Heart right ventricle (tissue), 16 donors: ENCODE measurements at regions of chr6 and their contacts with region 1.

Region 1: GRCh38 chr6:122059918-122060317 is 339.5 kb upstream of the HSF2 start:
- DNase-seq: no peak
- ATAC-seq: no peak
- H3K4me3 ChIP-seq: no peak overlapping the region
- H3K27ac ChIP-seq: no peak overlapping the region
- H3K4me1 ChIP-seq: no peaks in the 10 kb centered on the region
- H3K27me3 ChIP-seq: no peaks in the 10 kb centered on the region
- CTCF ChIP-seq: no peak

Region 2: GRCh38 chr6:121901432-121901831 is 158.5 kb before region 1 on chr6:
- intact Hi-C with region 1: no loop called
- DNase-seq: no peak
- ATAC-seq: no peak
- H3K4me3 ChIP-seq: no peak overlapping the region
- H3K27ac ChIP-seq: no peak overlapping the region
- H3K4me1 ChIP-seq: no peaks in the 10 kb centered on the region
- H3K27me3 ChIP-seq: no peaks in the 10 kb centered on the region
- CTCF ChIP-seq: no peak

Region 3: DNA sequence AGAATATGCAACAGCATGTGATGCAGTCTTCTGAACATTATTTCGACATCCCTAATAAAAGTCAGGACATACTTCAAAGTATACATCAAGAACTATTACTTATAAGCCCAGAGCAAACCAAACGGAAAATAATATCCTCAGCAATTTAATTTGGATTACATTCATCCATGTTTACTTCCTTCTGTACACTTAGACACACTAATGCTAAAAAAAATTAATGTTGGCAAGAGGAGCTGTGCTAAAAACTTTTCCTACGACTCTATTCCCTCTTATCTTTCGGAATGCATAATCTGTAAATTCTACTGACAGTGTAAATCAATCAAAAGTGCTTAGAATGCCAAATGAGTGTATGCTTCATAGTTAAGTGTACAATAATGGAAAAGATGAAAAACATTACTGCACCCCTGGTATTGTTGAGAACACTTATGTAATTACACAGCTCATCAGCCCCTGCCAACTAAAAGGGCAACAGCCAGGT is 38.3 kb after region 1 on chr6:
- intact Hi-C with region 1: no loop called
- DNase-seq: no peak
- ATAC-seq: no peak
- H3K4me3 ChIP-seq: no peak overlapping the region
- H3K27ac ChIP-seq: no peak overlapping the region
- H3K4me1 ChIP-seq: peaks cover 0 to 6% (median 0%) of the 10 kb centered on the region in 9 donors
- H3K27me3 ChIP-seq: no peaks in the 10 kb centered on the region
- CTCF ChIP-seq: no peak

Region 4: GRCh38 chr6:122165014-122165413 is 105.1 kb after region 1 on chr6:
- intact Hi-C with region 1: loop called in 1 of 10 experiments (anchors 10 kb)
- DNase-seq: no peak
- ATAC-seq: no peak
- H3K4me3 ChIP-seq: no peak overlapping the region
- H3K27ac ChIP-seq: no peak overlapping the region
- H3K4me1 ChIP-seq: no peaks in the 10 kb centered on the region
- H3K27me3 ChIP-seq: no peaks in the 10 kb centered on the region
- CTCF ChIP-seq: no peak